ENCODE measurements at regions of chr3 and their contacts with region 1.

Region 1: DNA sequence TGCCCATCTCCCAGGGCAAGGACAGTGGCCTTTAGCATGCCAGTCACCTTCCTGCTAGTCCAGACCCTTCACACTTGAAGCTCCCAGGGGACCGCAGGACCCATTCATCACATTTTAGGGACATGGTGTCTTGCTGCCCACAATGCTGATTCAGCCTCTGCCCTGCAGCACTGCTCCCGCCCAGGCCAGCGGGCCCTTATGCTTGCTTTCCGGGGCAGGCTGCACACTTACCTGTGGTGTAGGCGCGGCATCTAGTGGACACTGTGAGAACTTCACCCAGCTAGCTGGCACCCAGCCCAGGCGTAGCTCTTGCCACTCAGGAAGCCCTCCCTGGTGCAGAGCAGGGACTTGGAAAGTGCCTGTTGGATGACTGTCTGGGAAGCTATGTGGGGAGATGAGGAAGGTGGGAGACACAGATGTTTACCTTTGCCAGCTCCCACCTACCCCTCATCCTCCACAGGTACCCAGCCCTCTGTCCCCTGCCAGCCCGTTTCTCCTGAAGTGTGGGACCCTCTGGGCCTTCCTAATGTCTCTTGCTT is 26.2 kb upstream of the NR2C2 start:
- DNase-seq: peak; percentile 94
- H3K4me3 Mint-ChIP-seq: no peak overlapping the region
- H3K27ac Mint-ChIP-seq: no peak overlapping the region
- H3K4me1 Mint-ChIP-seq: no peaks in the 10 kb centered on the region
- H3K27me3 Mint-ChIP-seq: no peaks in the 10 kb centered on the region

Region 2: GRCh38 chr3:14261229-14261628 is 659.9 kb before region 1 on chr3:
- intact Hi-C with region 1: loop called (anchors 2 kb)
- DNase-seq: peak; percentile 92
- H3K4me3 Mint-ChIP-seq: no peak overlapping the region
- H3K27ac Mint-ChIP-seq: no peak overlapping the region
- H3K4me1 Mint-ChIP-seq: no peaks in the 10 kb centered on the region
- H3K27me3 Mint-ChIP-seq: peaks cover 7% of the 10 kb centered on the region

Region 3: GRCh38 chr3:14633819-14634424 is 287.2 kb before region 1 on chr3:
- intact Hi-C with region 1: loop called (anchors 1 kb)
- DNase-seq: peak; percentile 87
- H3K4me3 Mint-ChIP-seq: no peak overlapping the region
- H3K27ac Mint-ChIP-seq: no peak overlapping the region
- H3K4me1 Mint-ChIP-seq: no peaks in the 10 kb centered on the region
- H3K27me3 Mint-ChIP-seq: peaks cover 25% of the 10 kb centered on the region

Region 4: GRCh38 chr3:14791343-14791945 is 129.7 kb before region 1 on chr3:
- intact Hi-C with region 1: loop called (anchors 1 kb)
- DNase-seq: peak; percentile 87
- H3K4me3 Mint-ChIP-seq: no peak overlapping the region
- H3K27ac Mint-ChIP-seq: no peak overlapping the region
- H3K4me1 Mint-ChIP-seq: no peaks in the 10 kb centered on the region
- H3K27me3 Mint-ChIP-seq: peaks cover 21% of the 10 kb centered on the region

Region 5: DNA sequence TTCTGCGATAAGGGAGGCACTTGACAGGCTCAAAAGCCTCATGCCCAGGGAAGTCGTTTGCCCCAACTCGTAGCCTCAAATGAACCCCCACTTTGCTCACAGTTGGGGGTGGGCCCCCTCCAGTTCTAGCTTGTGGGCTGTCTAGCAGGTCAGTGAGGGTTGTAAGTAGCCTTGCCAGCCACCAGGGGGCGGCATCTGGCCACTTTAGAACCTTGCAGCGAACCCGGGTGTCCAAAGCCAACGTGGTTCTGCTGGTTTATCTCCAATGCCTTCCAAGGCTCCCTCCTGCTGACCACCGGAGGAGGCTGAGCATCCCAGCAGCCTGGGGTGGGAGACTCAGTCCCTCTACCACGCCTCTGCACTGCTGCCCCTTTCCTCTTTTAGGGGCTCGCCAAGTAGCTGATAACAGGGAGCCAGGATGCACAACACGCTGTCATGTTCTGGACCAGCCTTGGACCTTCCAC is 187.0 kb after region 1 on chr3:
- intact Hi-C with region 1: loop called (anchors 1 kb)
- DNase-seq: peak; percentile 92
- H3K4me3 Mint-ChIP-seq: no peak overlapping the region
- H3K27ac Mint-ChIP-seq: no peak overlapping the region
- H3K4me1 Mint-ChIP-seq: peaks cover 8% of the 10 kb centered on the region
- H3K27me3 Mint-ChIP-seq: peaks cover 16% of the 10 kb centered on the region

Region 6: GRCh38 chr3:15384510-15385237 is 463.5 kb after region 1 on chr3:
- intact Hi-C with region 1: no loop called
- DNase-seq: no peak
- H3K4me3 Mint-ChIP-seq: no peak overlapping the region
- H3K27ac Mint-ChIP-seq: no peak overlapping the region
- H3K4me1 Mint-ChIP-seq: peaks cover 7% of the 10 kb centered on the region
- H3K27me3 Mint-ChIP-seq: peaks cover 4% of the 10 kb centered on the region

Measured in activated CD4-positive, alpha-beta T cell treated with anti-CD3 and anti-CD28 coated beads, Interleukin-2, amount 10 ng/mL, durations not matched to agents 24 days and 14 days (primary cell).